Common myeloid progenitor, CD34-positive (primary cell): ENCODE measurements at regions of chr22 and their contacts with region 1.

Region 1: GRCh38 chr22:29270471-29271271 is 2.6 kb downstream of the EWSR1 start:
- DNase-seq: peak; percentile 46 to 80 (median 63)
- H3K4me3 ChIP-seq: peak overlapping the region in 5 of 7 experiments; percentile 77 to 95 (median 89)
- H3K27ac ChIP-seq: peak overlapping the region; percentile 27 to 100
- H3K4me1 ChIP-seq: peaks cover 31 to 58% (median 40%) of the 10 kb centered on the region in 4 experiments
- H3K27me3 ChIP-seq: no peaks in the 10 kb centered on the region

Region 2: DNA sequence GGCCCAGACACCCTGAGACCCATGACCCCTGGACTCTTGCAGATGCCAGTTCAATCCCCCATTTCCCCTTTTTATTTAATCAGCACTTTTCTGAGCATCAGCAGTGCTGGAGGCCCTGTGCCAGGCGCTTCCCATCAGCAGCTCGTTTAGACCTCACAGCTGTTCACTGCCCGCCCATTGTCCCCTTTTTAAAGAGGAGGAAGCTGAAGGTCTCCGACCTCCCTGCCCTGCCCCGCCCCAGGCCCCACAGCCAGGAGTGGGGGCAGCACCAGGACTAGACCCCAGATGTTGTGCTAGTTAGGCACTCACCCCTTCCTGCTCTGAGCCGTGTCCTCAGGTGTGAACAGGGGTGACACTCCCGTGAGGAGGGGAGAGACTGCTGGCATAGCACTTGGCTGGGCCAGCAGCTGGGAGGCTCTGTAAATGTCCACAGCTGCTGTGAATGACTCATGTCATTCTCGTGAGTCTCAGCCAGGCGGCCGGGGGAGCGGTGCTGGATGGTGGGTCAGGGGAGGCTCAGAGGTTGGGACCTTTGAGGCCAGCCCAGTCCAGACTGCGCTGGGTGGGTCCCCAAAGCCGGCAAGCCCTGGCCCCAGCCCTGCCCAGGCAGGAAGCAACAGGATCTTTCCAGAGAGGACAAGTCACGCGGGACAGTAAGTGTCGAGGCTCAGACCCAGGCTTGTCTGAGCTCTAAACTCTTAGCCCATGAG is 45.1 kb before region 1 on chr22:
- CTCF ChIA-PET with region 1: no interaction called
- POLR2A ChIA-PET with region 1: no interaction called
- DNase-seq: peak in 2 of 3 donors; percentile 71 to 81
- H3K4me3 ChIP-seq: no peak overlapping the region
- H3K27ac ChIP-seq: peak overlapping the region in 1 of 2 experiments; percentile 6
- H3K4me1 ChIP-seq: peaks cover 0 to 29% (median 14%) of the 10 kb centered on the region in 4 experiments
- H3K27me3 ChIP-seq: no peaks in the 10 kb centered on the region

Region 3: GRCh38 chr22:29288837-29289236 is 18.2 kb after region 1 on chr22:
- CTCF ChIA-PET with region 1: interaction called, 23 read pairs
- POLR2A ChIA-PET with region 1: interaction called, 3 read pairs
- DNase-seq: no peak
- H3K4me3 ChIP-seq: no peak overlapping the region
- H3K27ac ChIP-seq: no peak overlapping the region
- H3K4me1 ChIP-seq: no peaks in the 10 kb centered on the region
- H3K27me3 ChIP-seq: no peaks in the 10 kb centered on the region

Region 4: DNA sequence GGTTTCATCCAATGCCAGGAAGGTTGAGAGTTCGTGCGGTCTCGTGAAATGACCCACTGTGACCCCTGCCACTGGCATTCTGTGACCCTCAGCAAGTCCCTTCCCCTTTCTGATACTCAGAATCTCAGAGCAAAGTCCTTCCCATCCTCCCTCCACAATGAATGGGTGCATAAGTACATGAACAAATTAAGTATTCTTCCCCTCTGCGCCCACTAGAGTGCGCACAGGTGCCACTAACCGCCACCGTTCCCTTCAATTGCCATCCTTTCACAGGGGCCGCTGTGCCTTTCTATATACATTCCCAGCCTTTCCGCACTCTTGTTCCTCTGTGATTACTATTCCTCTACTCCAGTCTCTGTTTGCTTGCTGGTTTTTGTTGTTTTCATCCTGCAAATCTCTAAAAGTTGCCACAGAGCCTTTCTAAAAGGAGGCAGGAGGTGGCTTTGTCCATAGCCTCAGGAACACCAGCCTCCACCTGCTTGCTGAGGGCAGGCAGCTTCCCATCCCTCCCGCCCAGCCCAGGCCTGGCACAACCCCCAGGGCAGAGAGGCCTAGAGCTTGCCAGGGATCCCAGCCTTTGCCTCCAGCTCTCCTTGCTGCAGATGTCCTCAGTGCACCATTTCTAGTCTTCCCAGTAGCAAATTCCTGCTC is 124.4 kb after region 1 on chr22:
- CTCF ChIA-PET with region 1: no interaction called
- POLR2A ChIA-PET with region 1: no interaction called
- DNase-seq: peak; percentile 71 to 84 (median 82)
- H3K4me3 ChIP-seq: no peak overlapping the region
- H3K27ac ChIP-seq: no peak overlapping the region
- H3K4me1 ChIP-seq: peaks cover 3 to 17% (median 11%) of the 10 kb centered on the region in 4 experiments
- H3K27me3 ChIP-seq: no peaks in the 10 kb centered on the region

Region 5: GRCh38 chr22:29443452-29443851 is 172.8 kb after region 1 on chr22:
- CTCF ChIA-PET with region 1: no interaction called
- POLR2A ChIA-PET with region 1: no interaction called
- DNase-seq: no peak
- H3K4me3 ChIP-seq: no peak overlapping the region
- H3K27ac ChIP-seq: no peak overlapping the region
- H3K4me1 ChIP-seq: no peaks in the 10 kb centered on the region
- H3K27me3 ChIP-seq: no peaks in the 10 kb centered on the region